CD8-positive, alpha-beta T cell (primary cell): ENCODE measurements at regions of chr14 and their contacts with region 1.

Region 1: GRCh38 chr14:63543000-63543825 is at the start of gene PPP2R5E:
- DNase-seq: peak; percentile 95 to 99 (median 97)
- ATAC-seq: peak; percentile 96
- H3K4me3 ChIP-seq: peak within 1 kb of the TSS; percentile 75 to 98
- H3K4me3 Mint-ChIP-seq: peak within 1 kb of the TSS; percentile 98
- H3K27ac ChIP-seq: peak within 1 kb of the TSS; percentile 71 to 91
- H3K27ac Mint-ChIP-seq: peak within 1 kb of the TSS; percentile 93
- H3K4me1 ChIP-seq: peaks cover 17% of the 10 kb centered on the region
- H3K4me1 Mint-ChIP-seq: peaks cover 33% of the 10 kb centered on the region
- H3K27me3 ChIP-seq: no peaks in the 10 kb centered on the region
- H3K27me3 Mint-ChIP-seq: no peaks in the 10 kb centered on the region
- CTCF ChIP-seq: no peak
- total RNA-seq, gene PPP2R5E: 33.5 to 35.9 TPM

Region 2: GRCh38 chr14:63388763-63389431 is 154.3 kb before region 1 on chr14:
- CTCF ChIA-PET with region 1: no interaction called
- POLR2A ChIA-PET with region 1: no interaction called
- intact Hi-C with region 1: loop called in 1 of 2 experiments (anchors 5 kb)
- DNase-seq: peak; percentile 15 to 63 (median 44)
- ATAC-seq: peak; percentile 75
- H3K4me3 ChIP-seq: no peak overlapping the region
- H3K4me3 Mint-ChIP-seq: no peak overlapping the region
- H3K27ac ChIP-seq: no peak overlapping the region
- H3K27ac Mint-ChIP-seq: no peak overlapping the region
- H3K4me1 ChIP-seq: no peaks in the 10 kb centered on the region
- H3K4me1 Mint-ChIP-seq: peaks cover 5% of the 10 kb centered on the region
- H3K27me3 ChIP-seq: no peaks in the 10 kb centered on the region
- H3K27me3 Mint-ChIP-seq: no peaks in the 10 kb centered on the region
- CTCF ChIP-seq: peak; percentile 57

Region 3: GRCh38 chr14:63493246-63493645 is 50.0 kb before region 1 on chr14:
- CTCF ChIA-PET with region 1: no interaction called
- POLR2A ChIA-PET with region 1: no interaction called
- intact Hi-C with region 1: no loop called
- DNase-seq: no peak
- ATAC-seq: no peak
- H3K4me3 ChIP-seq: no peak overlapping the region
- H3K4me3 Mint-ChIP-seq: no peak overlapping the region
- H3K27ac ChIP-seq: no peak overlapping the region
- H3K27ac Mint-ChIP-seq: peak overlapping the region; percentile 22
- H3K4me1 ChIP-seq: no peaks in the 10 kb centered on the region
- H3K4me1 Mint-ChIP-seq: peaks cover 39% of the 10 kb centered on the region
- H3K27me3 ChIP-seq: no peaks in the 10 kb centered on the region
- H3K27me3 Mint-ChIP-seq: no peaks in the 10 kb centered on the region
- CTCF ChIP-seq: no peak

Region 4: GRCh38 chr14:63624728-63625127 is 81.5 kb after region 1 on chr14:
- CTCF ChIA-PET with region 1: no interaction called
- POLR2A ChIA-PET with region 1: no interaction called
- intact Hi-C with region 1: loop called in 1 of 2 experiments (anchors 5 kb)
- DNase-seq: no peak
- ATAC-seq: no peak
- H3K4me3 ChIP-seq: no peak overlapping the region
- H3K4me3 Mint-ChIP-seq: no peak overlapping the region
- H3K27ac ChIP-seq: no peak overlapping the region
- H3K27ac Mint-ChIP-seq: no peak overlapping the region
- H3K4me1 ChIP-seq: no peaks in the 10 kb centered on the region
- H3K4me1 Mint-ChIP-seq: peaks cover 40% of the 10 kb centered on the region
- H3K27me3 ChIP-seq: no peaks in the 10 kb centered on the region
- H3K27me3 Mint-ChIP-seq: no peaks in the 10 kb centered on the region
- CTCF ChIP-seq: no peak

Region 5: GRCh38 chr14:63650256-63650952 is 107.2 kb after region 1 on chr14:
- CTCF ChIA-PET with region 1: no interaction called
- POLR2A ChIA-PET with region 1: interaction called, 11 read pairs
- intact Hi-C with region 1: no loop called
- DNase-seq: peak; percentile 19 to 87 (median 65)
- ATAC-seq: peak; percentile 96
- H3K4me3 ChIP-seq: peak overlapping the region; percentile 10 to 26
- H3K4me3 Mint-ChIP-seq: peak overlapping the region; percentile 69
- H3K27ac ChIP-seq: peak overlapping the region; percentile 78 to 93
- H3K27ac Mint-ChIP-seq: peak overlapping the region; percentile 100
- H3K4me1 ChIP-seq: peaks cover 40% of the 10 kb centered on the region
- H3K4me1 Mint-ChIP-seq: peaks cover 52% of the 10 kb centered on the region
- H3K27me3 ChIP-seq: no peaks in the 10 kb centered on the region
- H3K27me3 Mint-ChIP-seq: no peaks in the 10 kb centered on the region
- CTCF ChIP-seq: no peak

Region 6: GRCh38 chr14:63770187-63770807 is 227.1 kb after region 1 on chr14:
- CTCF ChIA-PET with region 1: interaction called, 3 read pairs
- POLR2A ChIA-PET with region 1: interaction called, 3 read pairs
- intact Hi-C with region 1: loop called in 1 of 2 experiments (anchors 2 kb)
- DNase-seq: peak; percentile 6 to 79 (median 60)
- ATAC-seq: peak; percentile 90
- H3K4me3 ChIP-seq: no peak overlapping the region
- H3K4me3 Mint-ChIP-seq: no peak overlapping the region
- H3K27ac ChIP-seq: no peak overlapping the region
- H3K27ac Mint-ChIP-seq: no peak overlapping the region
- H3K4me1 ChIP-seq: no peaks in the 10 kb centered on the region
- H3K4me1 Mint-ChIP-seq: peaks cover 3% of the 10 kb centered on the region
- H3K27me3 ChIP-seq: no peaks in the 10 kb centered on the region
- H3K27me3 Mint-ChIP-seq: no peaks in the 10 kb centered on the region
- CTCF ChIP-seq: peak; percentile 70

Region 7: DNA sequence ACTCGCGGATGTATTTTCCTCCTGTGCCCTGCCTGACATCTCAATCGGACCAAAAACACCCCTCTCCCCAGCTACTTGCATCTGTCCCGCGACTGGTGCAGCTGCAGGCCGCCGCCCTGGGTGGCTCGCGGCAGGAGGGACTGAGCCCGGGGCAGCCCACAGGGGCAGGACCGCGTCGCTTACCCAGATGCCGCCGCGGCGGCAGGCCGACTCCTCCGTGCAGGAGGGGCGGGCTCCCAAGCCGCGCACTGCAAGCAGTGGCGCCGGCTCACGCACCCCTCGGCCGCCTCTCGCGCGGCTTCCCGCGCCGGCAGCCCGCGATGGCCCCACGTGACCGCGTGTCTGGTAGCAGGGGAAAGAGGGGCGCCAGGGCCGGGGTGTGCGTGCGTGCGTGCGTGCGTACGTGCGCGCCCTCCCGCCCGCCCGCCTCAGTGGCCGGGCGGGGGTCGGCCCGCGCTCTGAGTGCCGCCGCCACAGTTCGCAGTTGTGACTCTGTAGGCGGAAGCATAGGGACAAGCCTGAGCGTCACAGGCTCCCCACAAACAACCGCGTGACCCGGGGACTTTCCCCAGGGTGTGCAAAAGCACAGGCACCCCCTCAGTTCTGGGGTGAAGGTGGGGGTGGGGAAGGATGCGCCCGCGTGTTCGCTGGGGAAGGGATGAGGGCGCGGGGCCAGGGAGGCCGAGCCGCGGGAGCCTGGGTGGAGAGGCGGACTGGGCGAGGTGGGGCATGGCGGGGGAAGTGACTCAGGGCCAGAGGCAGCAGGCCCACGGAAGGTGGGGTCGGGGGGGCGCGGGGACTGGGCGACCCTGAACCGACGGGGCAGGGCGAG is 960.5 kb after region 1 on chr14 and contains the start of gene ZBTB25:
- CTCF ChIA-PET with region 1: no interaction called
- POLR2A ChIA-PET with region 1: interaction called, 4 read pairs
- intact Hi-C with region 1: loop called in 1 of 2 experiments (anchors 2 kb)
- DNase-seq: peak; percentile 91 to 100 (median 96)
- ATAC-seq: peak; percentile 68
- H3K4me3 ChIP-seq: peak within 1 kb of the TSS; percentile 78 to 95
- H3K4me3 Mint-ChIP-seq: peak within 1 kb of the TSS; percentile 91
- H3K27ac ChIP-seq: peak within 1 kb of the TSS; percentile 99 to 100
- H3K27ac Mint-ChIP-seq: peak within 1 kb of the TSS; percentile 100
- H3K4me1 ChIP-seq: peaks cover 59% of the 10 kb centered on the region
- H3K4me1 Mint-ChIP-seq: peaks cover 66% of the 10 kb centered on the region
- H3K27me3 ChIP-seq: no peaks in the 10 kb centered on the region
- H3K27me3 Mint-ChIP-seq: no peaks in the 10 kb centered on the region
- CTCF ChIP-seq: no peak
- total RNA-seq, gene ZBTB25: 42.3 to 43.8 TPM